Cardiac septum (tissue), 1 donor: ENCODE measurements at regions of chr1 and their contacts with region 1.

Region 1: GRCh38 chr1:24018611-24019580 is 38.8 kb upstream of the SRSF10 start:
- DNase-seq: peak; percentile 92

Region 2: DNA sequence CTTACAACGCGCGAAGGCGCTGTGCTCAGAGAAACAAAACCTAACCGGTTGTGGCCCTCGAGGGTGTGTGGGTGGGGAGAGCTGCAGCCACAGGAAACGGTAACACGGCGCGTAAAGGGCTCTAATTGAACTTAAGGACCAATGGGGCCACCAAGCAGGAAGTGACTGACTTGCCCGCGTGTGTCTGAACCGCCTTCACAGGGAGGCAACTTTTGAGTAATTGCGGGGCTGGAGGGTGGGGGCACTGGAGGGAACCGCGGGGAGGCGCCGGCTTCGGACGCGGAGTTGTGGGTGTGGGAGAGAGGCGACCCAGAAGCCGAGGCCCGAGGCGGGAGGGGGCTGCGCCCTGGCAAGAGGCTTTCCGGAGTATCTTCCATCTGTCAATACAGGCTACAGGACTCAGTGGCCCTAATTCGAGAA is 59.8 kb before region 1 on chr1:
- intact Hi-C with region 1: loop called (anchors 2 kb)
- DNase-seq: peak; percentile 91